ENCODE measurements at regions of chr5 and their contacts with region 1.

Region 1: DNA sequence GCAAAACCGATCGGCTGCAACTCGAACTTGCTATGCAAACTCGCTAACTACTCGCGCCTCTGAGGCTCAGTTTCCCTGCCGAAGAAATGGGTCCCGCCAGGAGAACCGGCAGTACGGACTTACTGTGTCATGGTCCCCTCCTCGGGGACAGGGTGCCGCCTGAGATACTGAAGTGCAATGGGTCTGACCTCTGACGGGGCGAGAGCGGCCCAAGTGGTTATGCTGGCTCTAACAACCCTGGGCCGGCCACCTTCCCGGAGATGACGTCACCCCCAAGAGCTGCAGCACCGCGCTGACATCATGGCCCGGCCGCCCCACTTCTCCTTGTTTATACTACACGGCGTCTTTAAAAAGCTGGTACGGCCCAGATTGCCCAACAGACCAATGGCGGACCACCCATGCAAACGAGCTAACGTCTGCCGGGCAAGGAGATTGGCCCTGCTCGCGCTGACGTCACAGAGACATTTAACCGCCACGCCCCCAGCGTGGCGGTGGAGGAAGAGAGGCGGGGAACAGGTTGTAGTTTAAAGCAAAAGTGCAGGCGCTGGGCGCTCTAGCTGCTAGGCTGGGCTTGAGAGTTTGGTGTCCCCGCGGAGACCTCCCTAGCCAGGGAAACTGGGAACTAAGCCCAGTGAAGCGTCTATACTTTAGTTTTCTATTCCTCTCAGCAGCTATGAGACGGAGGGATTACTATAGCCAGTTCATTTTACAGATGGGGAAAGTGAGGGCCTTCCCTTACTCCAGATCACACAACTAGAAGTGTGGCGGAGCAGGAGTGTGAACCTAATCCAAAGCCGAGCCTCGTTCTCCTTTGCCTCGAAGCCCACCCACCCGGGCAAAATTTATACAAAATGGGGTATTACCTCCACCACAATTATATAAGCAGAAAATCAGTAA is 654 bp upstream of the RNF44 start:
- DNase-seq: peak; percentile 99
- ATAC-seq: peak; percentile 89 to 93 (median 90)
- H3K4me3 ChIP-seq: peak overlapping the region; percentile 56 to 98 (median 88)
- H3K27ac ChIP-seq: peak overlapping the region; percentile 92 to 100 (median 96)
- H3K4me1 ChIP-seq: peaks cover 15 to 77% (median 57%) of the 10 kb centered on the region in 12 donors
- H3K27me3 ChIP-seq: no peaks in the 10 kb centered on the region
- CTCF ChIP-seq: no peak
- POLR2A ChIP-seq: peak in 1 of 2 donors; percentile 39

Region 2: GRCh38 chr5:176388444-176389134 is 149.3 kb before region 1 on chr5 and contains the starts of genes HIGD2A and NOP16:
- intact Hi-C with region 1: loop called in 1 of 10 experiments (anchors 10 kb)
- DNase-seq: peak; percentile 98 to 100 (median 100)
- ATAC-seq: peak; percentile 94 to 97 (median 96)
- H3K4me3 ChIP-seq: peak within 1 kb of the TSS; percentile 53 to 89 (median 82)
- H3K27ac ChIP-seq: peak within 1 kb of the TSS; percentile 85 to 100 (median 96)
- H3K4me1 ChIP-seq: peaks cover 3 to 30% (median 22%) of the 10 kb centered on the region in 12 donors
- H3K27me3 ChIP-seq: no peaks in the 10 kb centered on the region
- CTCF ChIP-seq: no peak
- POLR2A ChIP-seq: peak in 1 of 2 donors; percentile 36
- total RNA-seq, gene HIGD2A: 177 to 318 (median 218) TPM
- total RNA-seq, gene NOP16: 9.3 to 33.9 (median 15.8) TPM

Region 3: GRCh38 chr5:176415952-176416924 is 121.6 kb before region 1 on chr5 and contains the start of gene CLTB:
- intact Hi-C with region 1: loop called in 7 of 10 experiments (anchors 2 to 10 kb)
- DNase-seq: peak; percentile 92 to 97 (median 94)
- ATAC-seq: peak; percentile 90 to 94 (median 93)
- H3K4me3 ChIP-seq: peak within 1 kb of the TSS; percentile 47 to 100 (median 84)
- H3K27ac ChIP-seq: peak within 1 kb of the TSS; percentile 83 to 99 (median 96)
- H3K4me1 ChIP-seq: peaks cover 8 to 52% (median 42%) of the 10 kb centered on the region in 12 donors
- H3K27me3 ChIP-seq: no peaks in the 10 kb centered on the region
- CTCF ChIP-seq: peak; percentile 43 to 92 (median 83)
- POLR2A ChIP-seq: peak; percentile 85 to 93
- total RNA-seq, gene CLTB: 185 to 401 (median 231) TPM

Region 4: GRCh38 chr5:177006265-177006972 is 468.6 kb after region 1 on chr5 and contains the start of gene UIMC1:
- intact Hi-C with region 1: loop called in 1 of 10 experiments (anchors 10 kb)
- DNase-seq: peak; percentile 92 to 96 (median 92)
- ATAC-seq: peak; percentile 83 to 93 (median 92)
- H3K4me3 ChIP-seq: peak within 1 kb of the TSS; percentile 60 to 98 (median 92)
- H3K27ac ChIP-seq: peak within 1 kb of the TSS; percentile 88 to 98 (median 97)
- H3K4me1 ChIP-seq: peaks cover 0 to 26% (median 18%) of the 10 kb centered on the region in 12 donors
- H3K27me3 ChIP-seq: no peaks in the 10 kb centered on the region
- CTCF ChIP-seq: no peak
- POLR2A ChIP-seq: peak in 1 of 2 donors; percentile 44
- total RNA-seq, gene UIMC1: 22.6 to 40.2 (median 36.8) TPM